ENCODE measurements at regions of chr13 and their contacts with region 1.

Region 1: DNA sequence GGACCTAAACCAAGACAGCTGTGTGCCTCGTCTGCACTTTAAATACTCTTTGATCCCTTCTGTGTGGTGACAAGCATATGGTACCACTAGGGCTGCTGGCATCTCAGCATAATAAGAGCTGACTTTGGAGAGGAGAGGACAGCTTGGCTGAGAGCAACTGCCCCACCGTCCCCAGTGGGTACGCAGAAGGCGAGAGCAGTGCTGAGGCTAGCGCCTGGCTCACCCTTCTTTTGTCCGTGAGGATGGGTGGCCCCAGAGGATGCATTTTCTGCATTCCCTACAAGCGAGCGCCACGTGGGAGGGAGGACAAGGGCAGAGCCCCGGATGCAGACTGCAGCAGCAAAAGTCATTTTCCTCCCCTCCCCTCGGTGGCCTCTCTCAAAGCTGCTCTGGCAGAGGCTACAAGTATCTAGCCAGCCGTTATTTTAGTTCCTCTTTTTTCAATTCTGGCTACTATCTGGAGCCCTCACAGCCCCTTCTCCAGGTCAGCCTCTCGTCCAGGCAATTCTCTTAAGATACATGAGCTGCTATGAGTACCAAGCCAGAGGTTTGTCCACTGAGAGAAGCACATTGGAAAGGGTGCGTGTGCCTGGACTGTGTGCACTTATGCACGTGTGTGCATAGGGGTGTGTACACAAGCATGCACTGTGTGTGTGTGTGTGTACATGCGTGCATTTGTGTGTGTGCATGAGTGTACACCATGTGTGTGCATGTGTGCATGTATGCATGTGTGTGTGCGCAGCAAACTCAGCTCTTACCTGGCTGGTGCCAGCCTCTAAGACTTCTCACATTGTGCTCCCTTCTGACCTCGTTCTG is 51.3 kb downstream of the RAB20 start:
- DNase-seq: no peak
- ATAC-seq: peak; percentile 2

Region 2: DNA sequence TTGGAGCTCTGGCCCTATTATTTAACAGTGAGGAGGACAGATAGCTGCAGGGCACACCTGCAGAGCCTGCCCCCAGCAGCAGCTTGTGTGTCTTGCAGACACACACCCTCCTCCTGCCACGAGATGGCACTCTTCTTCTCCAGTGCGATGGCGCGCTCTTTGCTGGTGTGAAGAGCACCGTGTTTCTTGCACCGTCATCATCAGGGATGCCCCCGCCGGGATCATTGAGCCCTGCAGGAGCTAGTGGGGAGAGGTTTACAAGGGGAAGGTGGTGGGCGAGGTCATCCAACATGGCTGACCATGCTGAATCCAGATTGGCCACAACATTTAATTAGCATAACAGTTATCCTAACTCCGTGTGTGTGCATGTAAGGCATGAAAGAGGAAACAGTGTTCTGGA is 54.2 kb before region 1 on chr13:
- intact Hi-C with region 1: loop called (anchors 5 kb)
- DNase-seq: peak; percentile 86
- ATAC-seq: peak; percentile 82

Region 3: DNA sequence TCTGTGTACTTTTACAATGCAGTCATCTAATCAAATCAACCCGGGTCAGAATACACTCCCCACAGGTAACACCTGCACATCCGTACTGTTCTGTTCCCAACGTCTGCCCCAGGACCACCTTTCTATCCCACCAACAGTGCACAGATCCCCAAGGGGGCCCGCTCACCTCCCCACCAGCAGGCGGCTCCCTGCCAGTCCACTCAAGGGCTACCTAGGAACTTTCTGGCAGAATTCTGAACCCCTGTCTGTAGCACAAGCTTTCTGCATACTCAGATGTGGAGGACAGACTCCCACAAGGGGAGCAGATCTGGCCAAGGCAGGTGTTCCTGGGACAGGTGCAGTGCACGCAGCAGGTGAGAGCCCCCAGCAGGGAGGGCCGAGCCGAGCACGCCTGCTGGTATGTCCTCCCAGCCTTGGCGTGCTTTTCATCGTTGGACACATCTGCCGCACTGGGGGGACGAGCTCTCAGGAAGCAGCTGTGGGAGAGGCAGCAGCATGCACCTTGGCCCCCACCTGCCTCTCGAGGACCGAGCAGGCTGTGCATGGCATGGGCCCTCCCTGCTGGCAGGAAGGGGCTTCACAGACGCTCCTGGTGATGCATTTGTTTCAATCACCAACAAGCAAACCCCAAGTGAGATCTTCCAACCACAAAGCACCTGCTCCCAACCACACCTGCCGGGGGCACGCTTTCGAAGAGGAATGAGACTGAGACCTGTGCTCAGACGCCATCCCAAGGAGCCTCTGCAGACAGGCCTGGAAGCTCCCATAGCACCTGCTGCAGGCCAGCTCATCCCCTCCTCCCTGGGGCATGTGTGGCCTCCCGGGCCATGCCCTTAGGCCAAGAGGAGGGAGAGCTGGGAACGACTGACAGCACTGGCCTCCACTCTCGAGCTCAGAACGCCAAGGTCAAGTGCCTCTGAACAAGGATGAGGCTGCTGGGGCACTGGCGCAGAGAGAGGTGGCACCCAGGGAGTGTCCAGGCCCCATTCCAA is 15.4 kb after region 1 on chr13:
- intact Hi-C with region 1: loop called (anchors 1 kb)
- DNase-seq: no peak
- ATAC-seq: peak; percentile 69

Region 4: GRCh38 chr13:111129465-111130115 is 619.4 kb after region 1 on chr13:
- intact Hi-C with region 1: no loop called
- DNase-seq: no peak
- ATAC-seq: no peak

Measured in Right ventricle myocardium inferior (tissue), 1 donor.